Right ventricle myocardium inferior (tissue), 1 donor: ENCODE measurements at regions of chr6 and their contacts with region 1.

Region 1: DNA sequence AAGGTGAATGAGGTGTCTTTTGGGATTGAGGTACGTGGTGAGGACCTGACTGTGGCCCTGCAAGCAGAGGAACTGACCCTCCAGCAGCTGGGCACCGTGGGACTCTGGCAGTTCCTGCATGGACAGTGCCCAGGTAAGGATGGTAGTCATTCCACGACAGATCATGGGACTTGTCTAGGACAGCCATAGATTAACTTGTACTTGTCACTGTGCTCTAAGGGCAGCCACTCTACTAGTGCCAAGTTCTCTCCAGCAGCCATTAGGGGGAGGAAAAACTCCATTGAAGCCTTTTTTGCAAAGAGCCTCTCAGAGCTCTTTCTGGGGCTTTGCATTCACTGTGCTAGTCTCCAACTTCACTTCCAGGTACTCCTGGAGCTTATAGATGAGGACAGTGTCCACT is 20.4 kb downstream of the TAF11 start:
- DNase-seq: no peak
- ATAC-seq: peak; percentile 72

Region 2: GRCh38 chr6:34839666-34840352 is 27.7 kb before region 1 on chr6:
- intact Hi-C with region 1: loop called (anchors 1 kb)
- DNase-seq: no peak
- ATAC-seq: no peak

Region 3: GRCh38 chr6:35139908-35140655 is 272.6 kb after region 1 on chr6:
- intact Hi-C with region 1: loop called (anchors 5 kb)
- DNase-seq: no peak
- ATAC-seq: peak; percentile 68